ENCODE measurements at regions of chr1 and their contacts with region 1.

Region 1: GRCh38 chr1:2233997-2234761 is 6.1 kb downstream of the SKI start:
- DNase-seq: peak; percentile 67
- H3K4me3 ChIP-seq: peak overlapping the region; percentile 71
- H3K27ac ChIP-seq: peak overlapping the region; percentile 80
- H3K4me1 ChIP-seq: peaks cover 54% of the 10 kb centered on the region
- H3K27me3 ChIP-seq: no peaks in the 10 kb centered on the region
- CTCF ChIP-seq: no peak

Region 2: GRCh38 chr1:2300851-2301606 is 66.8 kb after region 1 on chr1:
- CTCF ChIA-PET with region 1: interaction called, 3 read pairs
- POLR2A ChIA-PET with region 1: no interaction called
- intact Hi-C with region 1: loop called (anchors 5 kb)
- DNase-seq: peak; percentile 93
- H3K4me3 ChIP-seq: peak overlapping the region; percentile 37
- H3K27ac ChIP-seq: peak overlapping the region; percentile 79
- H3K4me1 ChIP-seq: peaks cover 42% of the 10 kb centered on the region
- H3K27me3 ChIP-seq: no peaks in the 10 kb centered on the region
- CTCF ChIP-seq: no peak

Region 3: DNA sequence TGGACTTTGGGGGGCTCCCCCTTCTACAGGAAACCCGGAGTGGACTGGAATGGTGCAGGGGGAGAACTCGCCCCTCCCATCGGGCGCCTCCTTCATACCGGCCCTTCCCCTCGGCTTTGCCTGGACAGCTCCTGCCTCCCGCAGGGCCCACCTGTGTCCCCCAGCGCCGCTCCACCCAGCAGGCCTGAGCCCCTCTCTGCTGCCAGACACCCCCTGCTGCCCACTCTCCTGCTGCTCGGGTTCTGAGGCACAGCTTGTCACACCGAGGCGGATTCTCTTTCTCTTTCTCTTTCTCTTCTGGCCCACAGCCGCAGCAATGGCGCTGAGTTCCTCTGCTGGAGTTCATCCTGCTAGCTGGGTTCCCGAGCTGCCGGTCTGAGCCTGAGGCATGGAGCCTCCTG is 322.1 kb after region 1 on chr1 and contains the start of gene TNFRSF14:
- CTCF ChIA-PET with region 1: no interaction called
- POLR2A ChIA-PET with region 1: no interaction called
- intact Hi-C with region 1: no loop called
- DNase-seq: peak; percentile 42
- H3K4me3 ChIP-seq: peak within 1 kb of the TSS; percentile 45
- H3K27ac ChIP-seq: peak within 1 kb of the TSS; percentile 72
- H3K4me1 ChIP-seq: peaks cover 17% of the 10 kb centered on the region
- H3K27me3 ChIP-seq: no peaks in the 10 kb centered on the region
- CTCF ChIP-seq: no peak
- total RNA-seq, gene TNFRSF14: 4.6 and 7.6 TPM in 2 replicates

Region 4: DNA sequence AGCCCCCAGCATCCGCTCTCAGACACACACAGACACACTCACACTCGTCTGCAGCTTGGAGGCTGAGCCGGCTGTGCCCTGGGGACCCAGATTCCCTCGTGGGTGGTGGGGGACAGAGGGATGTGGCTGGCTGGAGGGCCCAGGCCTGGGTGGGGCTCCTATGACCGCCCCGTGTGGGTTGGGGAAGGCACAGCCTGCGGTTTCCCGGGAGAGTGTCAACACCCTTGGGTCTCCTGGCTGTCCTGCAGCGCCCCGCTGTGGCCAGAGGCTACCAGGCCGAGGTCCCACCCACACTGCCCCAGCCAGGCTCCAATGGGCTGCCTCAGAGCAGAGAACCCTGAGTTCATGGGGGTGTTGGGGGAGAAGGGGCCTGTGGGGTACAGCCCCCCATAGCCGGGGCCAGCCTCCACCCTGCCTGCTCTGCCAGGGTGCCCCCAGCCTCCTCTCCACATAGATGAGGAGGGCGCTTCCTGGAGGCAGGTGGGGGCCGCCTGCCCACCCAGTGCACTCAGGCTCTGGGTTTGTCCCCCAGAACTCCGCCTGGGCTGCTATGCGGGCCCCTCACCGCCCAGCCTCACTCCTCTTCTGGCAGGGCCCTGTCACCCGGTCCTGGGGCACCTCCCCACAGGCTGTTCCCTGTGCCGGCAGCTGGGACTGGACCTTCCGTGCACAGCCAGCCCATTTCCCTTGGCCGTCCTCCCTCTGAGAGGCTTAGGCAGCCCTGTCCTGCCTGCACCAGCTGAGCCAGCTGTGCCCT is 567.5 kb after region 1 on chr1 and contains the start of gene TTC34:
- CTCF ChIA-PET with region 1: no interaction called
- POLR2A ChIA-PET with region 1: interaction called, 12 read pairs
- intact Hi-C with region 1: no loop called
- DNase-seq: peak; percentile 34
- H3K4me3 ChIP-seq: no peak within 1 kb of the TSS
- H3K27ac ChIP-seq: no peak within 1 kb of the TSS
- H3K4me1 ChIP-seq: no peaks in the 10 kb centered on the region
- H3K27me3 ChIP-seq: peaks cover 29% of the 10 kb centered on the region
- CTCF ChIP-seq: peak; percentile 53
- total RNA-seq, gene TTC34: 0.84 and 1.5 TPM in 2 replicates

Measured in A673 (cell line).